ENCODE measurements at regions of chr20 and their contacts with region 1.

Region 1: DNA sequence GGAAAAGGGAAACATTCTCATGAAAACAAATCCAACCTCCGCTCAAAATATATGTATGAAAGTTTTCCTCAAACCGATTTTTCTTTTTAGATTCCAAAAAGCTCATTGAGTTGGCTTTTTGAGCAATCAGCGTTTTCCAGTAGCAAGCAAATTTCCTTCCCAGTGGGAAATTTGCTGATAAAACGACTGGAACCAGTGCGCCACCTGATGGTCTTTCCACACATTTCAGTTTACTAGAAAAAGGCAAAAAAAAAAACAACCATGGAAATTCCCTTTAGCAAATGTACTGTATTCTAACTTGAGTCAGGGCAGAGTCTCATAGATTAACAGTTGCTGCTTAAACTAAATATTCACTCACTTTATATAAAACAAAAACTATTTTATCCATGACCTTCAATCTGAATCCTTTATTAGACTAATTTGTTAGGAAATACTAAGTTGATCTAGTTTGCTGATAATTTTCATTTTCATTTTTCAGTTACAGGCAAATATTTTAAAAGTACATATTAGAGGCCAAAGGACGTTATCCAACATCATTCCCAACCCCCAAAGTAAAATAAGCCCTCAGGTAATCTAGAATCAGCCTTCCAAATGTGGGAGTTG is 271.5 kb downstream of the FOXA2 start:
- DNase-seq: no peak
- ATAC-seq: no peak

Region 2: DNA sequence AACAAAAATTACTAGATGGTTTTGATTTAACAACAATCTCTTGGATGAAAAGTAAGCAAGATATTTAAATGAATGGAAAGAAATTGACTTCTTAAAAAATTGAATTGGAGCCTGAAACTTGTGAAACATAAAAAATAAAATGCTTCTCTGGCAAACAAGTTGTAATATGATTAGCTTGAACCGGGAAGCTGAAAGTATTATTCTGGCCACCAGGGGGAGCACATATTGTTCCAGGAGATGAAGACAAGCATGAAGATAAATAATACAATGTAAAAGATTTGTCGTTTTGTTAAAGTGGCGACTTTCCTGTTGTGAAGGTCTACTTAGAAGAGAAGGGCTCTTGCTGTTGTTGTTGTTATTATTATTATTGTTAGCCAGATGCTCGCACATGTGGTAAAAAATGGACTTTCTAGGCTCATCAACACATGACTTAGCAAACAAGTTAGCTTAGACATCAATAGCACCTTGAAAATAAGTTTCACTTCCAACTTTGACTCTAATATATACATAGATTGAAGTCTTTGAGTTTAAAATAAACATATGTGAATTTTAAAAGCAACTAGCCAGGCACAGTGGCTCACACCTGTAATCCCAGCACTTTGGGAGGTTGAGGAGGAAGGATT is 593.1 kb before region 1 on chr20:
- intact Hi-C with region 1: loop called (anchors 10 kb)
- DNase-seq: no peak
- ATAC-seq: no peak

Region 3: DNA sequence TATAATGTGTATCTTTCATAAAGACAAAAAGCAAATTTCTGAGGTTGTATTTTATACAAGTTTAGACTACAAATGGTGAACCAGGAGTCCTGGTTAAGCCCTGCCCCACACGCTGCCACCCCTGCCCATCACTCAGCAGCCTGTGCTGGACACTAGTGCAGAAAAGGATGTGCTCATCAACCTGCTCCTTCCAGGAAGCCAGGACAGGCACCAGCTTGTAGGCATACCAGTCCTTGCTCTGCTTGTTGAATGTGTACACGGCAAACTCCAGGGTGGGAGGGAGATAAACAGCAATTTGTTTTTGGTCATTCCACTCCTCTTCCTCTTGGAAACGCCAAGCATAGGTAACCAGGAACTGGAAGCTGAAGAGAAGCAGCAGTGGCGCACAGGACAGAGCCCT is 1237.4 kb after region 1 on chr20:
- intact Hi-C with region 1: no loop called
- DNase-seq: no peak
- ATAC-seq: no peak